ENCODE measurements at regions of chr19 and their contacts with region 1.

Region 1: DNA sequence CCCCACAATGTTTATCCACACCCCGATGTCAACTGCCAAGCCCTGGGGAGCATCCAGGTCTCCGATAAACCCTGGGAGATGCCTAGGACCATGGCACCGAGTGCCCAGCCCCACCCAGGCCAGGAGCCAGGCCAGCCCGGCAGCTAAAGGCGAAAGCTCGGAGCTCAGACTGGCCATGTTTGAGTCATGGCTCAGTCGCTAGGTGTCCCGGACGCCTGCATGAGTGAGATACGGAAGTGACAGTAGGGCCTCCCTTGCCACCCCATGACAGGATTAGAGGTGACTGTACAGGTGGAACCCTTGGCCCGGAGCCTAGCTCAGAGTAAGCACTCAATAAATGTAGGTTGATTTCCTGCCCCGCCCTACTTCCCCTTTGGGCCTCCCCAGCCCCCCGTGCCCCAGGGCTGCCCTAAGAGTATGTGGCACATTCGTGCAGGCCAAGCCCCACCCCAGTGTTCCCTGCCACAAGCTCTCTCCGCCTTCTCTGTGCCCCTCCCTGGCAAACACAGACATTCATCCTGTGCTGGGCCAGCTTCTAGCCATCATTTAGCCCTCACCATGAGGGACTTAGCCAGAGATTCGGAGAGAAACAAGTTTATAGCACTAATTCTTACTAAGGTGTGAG is 5.8 kb upstream of the TPM4 start:
- DNase-seq: peak; percentile 53 to 95 (median 90)
- ATAC-seq: peak; percentile 93
- H3K4me3 ChIP-seq: peak overlapping the region; percentile 56
- H3K4me3 Mint-ChIP-seq: peak overlapping the region in 4 of 10 donors; percentile 65 to 81 (median 68)
- H3K27ac ChIP-seq: peak overlapping the region; percentile 89
- H3K27ac Mint-ChIP-seq: no peak overlapping the region
- H3K4me1 ChIP-seq: peaks cover 22 to 61% of the 10 kb centered on the region in 2 donors
- H3K4me1 Mint-ChIP-seq: peaks cover 31 to 50% (median 42%) of the 10 kb centered on the region in 7 donors
- H3K27me3 ChIP-seq: no peaks in the 10 kb centered on the region
- H3K27me3 Mint-ChIP-seq: no peaks in the 10 kb centered on the region

Region 2: DNA sequence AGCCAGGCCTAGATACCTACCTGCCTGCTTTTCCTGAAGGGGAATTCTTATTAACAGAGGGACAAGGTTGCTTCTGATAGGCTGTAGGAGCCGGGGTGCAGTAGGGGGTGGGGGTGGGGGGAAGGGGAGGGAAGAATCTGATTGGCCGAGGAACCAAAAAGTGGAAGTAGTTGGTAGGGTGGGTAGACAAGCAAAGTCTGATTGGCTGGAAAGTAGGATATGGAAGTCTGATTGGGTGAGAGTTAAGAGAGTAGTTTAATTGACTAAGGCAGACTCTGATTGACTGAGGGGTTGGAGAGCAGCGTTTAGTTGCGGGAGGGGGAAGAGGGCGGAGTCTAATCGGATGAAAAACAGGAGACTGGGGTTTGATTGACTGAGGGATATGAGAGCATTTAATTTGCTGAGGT is 571.6 kb before region 1 on chr19:
- CTCF ChIA-PET with region 1: no interaction called
- POLR2A ChIA-PET with region 1: no interaction called
- intact Hi-C with region 1: no loop called
- DNase-seq: no peak
- ATAC-seq: no peak
- H3K4me3 ChIP-seq: no peak overlapping the region
- H3K4me3 Mint-ChIP-seq: peak overlapping the region in 1 of 10 donors; percentile 41
- H3K27ac ChIP-seq: no peak overlapping the region
- H3K27ac Mint-ChIP-seq: peak overlapping the region in 2 of 9 donors; percentile 6 to 9
- H3K4me1 ChIP-seq: peaks cover 0 to 6% of the 10 kb centered on the region in 2 donors
- H3K4me1 Mint-ChIP-seq: peaks cover 7 to 37% (median 23%) of the 10 kb centered on the region in 7 donors
- H3K27me3 ChIP-seq: no peaks in the 10 kb centered on the region
- H3K27me3 Mint-ChIP-seq: peaks cover 0 to 32% (median 0%) of the 10 kb centered on the region in 5 donors

Region 3: GRCh38 chr19:16051254-16052025 is 19.0 kb before region 1 on chr19:
- CTCF ChIA-PET with region 1: no interaction called
- POLR2A ChIA-PET with region 1: interaction called, 3 read pairs
- intact Hi-C with region 1: loop called in 1 of 2 experiments (anchors 1 kb)
- DNase-seq: peak in 7 of 9 donors; percentile 23 to 64 (median 44)
- ATAC-seq: peak; percentile 96
- H3K4me3 ChIP-seq: no peak overlapping the region
- H3K4me3 Mint-ChIP-seq: no peak overlapping the region
- H3K27ac ChIP-seq: no peak overlapping the region
- H3K27ac Mint-ChIP-seq: peak overlapping the region in 5 of 9 donors; percentile 31 to 59 (median 51)
- H3K4me1 ChIP-seq: no peaks in the 10 kb centered on the region
- H3K4me1 Mint-ChIP-seq: peaks cover 0 to 24% (median 15%) of the 10 kb centered on the region in 7 donors
- H3K27me3 ChIP-seq: no peaks in the 10 kb centered on the region
- H3K27me3 Mint-ChIP-seq: peaks cover 0 to 22% (median 0%) of the 10 kb centered on the region in 5 donors

Region 4: GRCh38 chr19:16095071-16095571 is 24.6 kb after region 1 on chr19:
- CTCF ChIA-PET with region 1: interaction called, 9 read pairs
- POLR2A ChIA-PET with region 1: interaction called, 14 read pairs
- intact Hi-C with region 1: no loop called
- DNase-seq: peak in 6 of 9 donors; percentile 24 to 45 (median 32)
- ATAC-seq: peak; percentile 71
- H3K4me3 ChIP-seq: no peak overlapping the region
- H3K4me3 Mint-ChIP-seq: peak overlapping the region; percentile 34 to 70 (median 62)
- H3K27ac ChIP-seq: peak overlapping the region; percentile 56
- H3K27ac Mint-ChIP-seq: peak overlapping the region; percentile 72 to 94 (median 88)
- H3K4me1 ChIP-seq: peaks cover 0 to 20% of the 10 kb centered on the region in 2 donors
- H3K4me1 Mint-ChIP-seq: peaks cover 14 to 48% (median 42%) of the 10 kb centered on the region in 7 donors
- H3K27me3 ChIP-seq: no peaks in the 10 kb centered on the region
- H3K27me3 Mint-ChIP-seq: no peaks in the 10 kb centered on the region